ENCODE measurements at regions of chr6 and their contacts with region 1.

Region 1: DNA sequence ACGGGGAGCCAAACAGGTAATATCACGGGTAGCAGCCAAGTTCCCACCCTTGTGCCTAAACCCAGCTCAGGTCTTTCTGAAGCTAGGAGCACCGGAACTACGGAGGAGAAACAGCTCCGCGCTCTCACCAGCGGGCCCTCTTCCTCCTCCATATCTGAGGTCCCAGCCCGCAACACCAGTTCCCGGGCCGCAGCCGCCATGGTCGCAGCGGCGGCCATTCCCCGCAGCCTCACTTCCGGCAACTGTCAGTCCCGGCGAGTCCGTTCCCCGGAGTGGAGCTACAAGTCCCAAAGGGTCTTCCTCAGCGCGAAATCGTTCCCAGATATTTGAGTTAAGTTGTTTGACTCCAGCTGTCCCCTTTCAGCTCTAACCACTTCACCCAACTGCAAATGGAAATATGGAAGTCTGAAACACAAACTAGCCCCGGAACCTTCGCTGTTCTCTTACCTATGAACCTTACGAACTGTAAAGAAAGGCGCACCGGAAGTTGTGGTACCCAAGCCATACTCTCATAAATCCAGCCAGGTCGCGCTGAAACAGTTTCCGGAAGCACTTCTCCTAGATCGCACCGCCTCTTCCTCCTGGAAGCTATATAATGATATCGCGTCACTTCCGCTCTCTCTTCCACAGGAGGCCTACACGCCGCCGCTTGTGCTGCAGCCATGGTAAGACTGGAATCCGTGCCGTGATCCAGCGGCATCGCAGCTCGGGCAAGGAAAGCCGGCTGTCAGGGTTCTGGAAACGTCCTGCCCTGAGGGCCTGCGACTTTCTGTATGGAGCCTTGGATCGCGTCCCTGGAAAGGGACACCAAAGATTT is at the starts of genes RPS18 and VPS52:
- DNase-seq: peak; percentile 94
- ATAC-seq: peak; percentile 92
- H3K4me3 Mint-ChIP-seq: peak within 1 kb of the TSS; percentile 91
- H3K27ac Mint-ChIP-seq: peak within 1 kb of the TSS; percentile 100
- H3K4me1 Mint-ChIP-seq: peaks cover 47% of the 10 kb centered on the region
- H3K27me3 Mint-ChIP-seq: no peaks in the 10 kb centered on the region
- total RNA-seq, gene RPS18: 2,706 to 4,631 TPM
- total RNA-seq, gene VPS52: 35.6 to 45.2 TPM

Region 2: GRCh38 chr6:32853541-32854375 is 417.9 kb before region 1 on chr6 and contains the starts of genes PSMB9 and TAP1:
- CTCF ChIA-PET with region 1: no interaction called
- POLR2A ChIA-PET with region 1: no interaction called
- intact Hi-C with region 1: loop called in 1 of 2 experiments (anchors 5 kb)
- DNase-seq: peak; percentile 98
- ATAC-seq: peak; percentile 84
- H3K4me3 Mint-ChIP-seq: peak within 1 kb of the TSS; percentile 100
- H3K27ac Mint-ChIP-seq: peak within 1 kb of the TSS; percentile 99
- H3K4me1 Mint-ChIP-seq: peaks cover 62% of the 10 kb centered on the region
- H3K27me3 Mint-ChIP-seq: no peaks in the 10 kb centered on the region
- total RNA-seq, gene PSMB9: 210 to 282 TPM
- total RNA-seq, gene TAP1: 191 to 255 TPM

Region 3: GRCh38 chr6:33161354-33162331 is 110.0 kb before region 1 on chr6:
- CTCF ChIA-PET with region 1: no interaction called
- POLR2A ChIA-PET with region 1: no interaction called
- intact Hi-C with region 1: no loop called
- DNase-seq: peak; percentile 90
- ATAC-seq: peak; percentile 95
- H3K4me3 Mint-ChIP-seq: peak overlapping the region; percentile 71
- H3K27ac Mint-ChIP-seq: peak overlapping the region; percentile 43
- H3K4me1 Mint-ChIP-seq: peaks cover 10% of the 10 kb centered on the region
- H3K27me3 Mint-ChIP-seq: peaks cover 4% of the 10 kb centered on the region

Region 4: DNA sequence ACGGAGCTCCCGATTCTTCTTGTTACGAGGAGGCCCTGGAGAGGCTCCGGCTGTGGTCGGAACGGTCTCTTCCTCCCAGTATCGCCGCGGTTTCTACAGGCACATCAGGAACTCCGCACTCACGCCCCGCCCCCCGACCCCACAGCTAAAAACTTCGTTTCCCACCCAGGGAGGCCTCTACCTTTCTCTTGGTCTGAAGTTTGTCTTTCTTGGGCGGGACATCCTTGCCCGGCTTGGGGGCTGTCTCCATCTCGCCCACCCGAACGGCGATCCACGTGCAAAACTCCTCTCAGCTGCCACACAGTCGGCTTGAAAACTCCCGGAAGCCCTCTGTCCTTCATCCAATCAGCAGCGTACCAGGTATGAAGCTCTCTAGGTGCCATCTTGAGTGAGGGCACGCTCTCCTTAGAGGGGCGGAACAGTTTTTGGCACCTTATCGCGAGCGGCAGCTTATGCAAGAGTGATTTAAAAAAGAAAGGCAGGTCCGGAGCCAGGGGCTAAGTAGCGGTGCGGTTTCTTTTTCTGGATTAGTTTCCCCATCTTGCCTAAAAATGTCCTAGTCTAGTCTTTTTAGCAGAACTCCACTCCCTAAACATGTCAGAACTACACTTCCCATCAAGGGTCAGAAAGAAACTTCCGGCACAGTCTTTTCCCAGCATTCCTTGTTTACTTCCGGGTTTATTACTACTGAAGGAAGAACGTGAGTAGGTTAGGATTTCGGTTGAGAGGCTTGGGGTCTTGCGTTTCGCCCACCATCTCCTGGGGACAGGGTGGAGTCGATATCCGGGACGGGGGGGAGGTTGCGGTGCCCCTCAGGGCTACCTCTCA is 17.5 kb after region 1 on chr6 and contains the starts of genes PFDN6 and WDR46:
- CTCF ChIA-PET with region 1: interaction called, 17 read pairs
- POLR2A ChIA-PET with region 1: interaction called, 25 read pairs
- intact Hi-C with region 1: loop called in 1 of 2 experiments (anchors 1 kb)
- DNase-seq: peak; percentile 87
- ATAC-seq: peak; percentile 98
- H3K4me3 Mint-ChIP-seq: peak within 1 kb of the TSS; percentile 98
- H3K27ac Mint-ChIP-seq: peak within 1 kb of the TSS; percentile 97
- H3K4me1 Mint-ChIP-seq: peaks cover 37% of the 10 kb centered on the region
- H3K27me3 Mint-ChIP-seq: no peaks in the 10 kb centered on the region
- total RNA-seq, gene PFDN6: 65.4 to 96.9 TPM
- total RNA-seq, gene WDR46: 63.5 to 69.4 TPM

Region 5: DNA sequence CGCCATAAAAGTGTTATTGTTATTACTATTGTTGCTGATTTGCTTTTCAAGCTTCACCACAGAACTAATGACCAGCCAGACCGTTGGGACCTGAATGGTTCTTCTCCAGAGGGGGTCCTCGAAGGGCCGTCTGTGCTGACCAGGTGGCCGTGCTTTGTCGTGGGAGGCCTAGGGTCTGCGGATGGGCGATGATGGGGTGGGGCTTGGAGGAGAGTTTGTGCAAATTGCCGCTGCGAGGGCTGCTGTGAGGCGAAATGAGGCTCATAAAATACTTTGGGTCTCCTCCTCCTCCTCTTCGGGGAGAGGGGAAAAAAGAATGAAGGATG is 51.9 kb after region 1 on chr6:
- CTCF ChIA-PET with region 1: no interaction called
- POLR2A ChIA-PET with region 1: interaction called, 10 read pairs
- intact Hi-C with region 1: loop called (anchors 1 kb)
- DNase-seq: no peak
- ATAC-seq: no peak
- H3K4me3 Mint-ChIP-seq: peak overlapping the region; percentile 99
- H3K27ac Mint-ChIP-seq: peak overlapping the region; percentile 99
- H3K4me1 Mint-ChIP-seq: peaks cover 46% of the 10 kb centered on the region
- H3K27me3 Mint-ChIP-seq: no peaks in the 10 kb centered on the region

Region 6: DNA sequence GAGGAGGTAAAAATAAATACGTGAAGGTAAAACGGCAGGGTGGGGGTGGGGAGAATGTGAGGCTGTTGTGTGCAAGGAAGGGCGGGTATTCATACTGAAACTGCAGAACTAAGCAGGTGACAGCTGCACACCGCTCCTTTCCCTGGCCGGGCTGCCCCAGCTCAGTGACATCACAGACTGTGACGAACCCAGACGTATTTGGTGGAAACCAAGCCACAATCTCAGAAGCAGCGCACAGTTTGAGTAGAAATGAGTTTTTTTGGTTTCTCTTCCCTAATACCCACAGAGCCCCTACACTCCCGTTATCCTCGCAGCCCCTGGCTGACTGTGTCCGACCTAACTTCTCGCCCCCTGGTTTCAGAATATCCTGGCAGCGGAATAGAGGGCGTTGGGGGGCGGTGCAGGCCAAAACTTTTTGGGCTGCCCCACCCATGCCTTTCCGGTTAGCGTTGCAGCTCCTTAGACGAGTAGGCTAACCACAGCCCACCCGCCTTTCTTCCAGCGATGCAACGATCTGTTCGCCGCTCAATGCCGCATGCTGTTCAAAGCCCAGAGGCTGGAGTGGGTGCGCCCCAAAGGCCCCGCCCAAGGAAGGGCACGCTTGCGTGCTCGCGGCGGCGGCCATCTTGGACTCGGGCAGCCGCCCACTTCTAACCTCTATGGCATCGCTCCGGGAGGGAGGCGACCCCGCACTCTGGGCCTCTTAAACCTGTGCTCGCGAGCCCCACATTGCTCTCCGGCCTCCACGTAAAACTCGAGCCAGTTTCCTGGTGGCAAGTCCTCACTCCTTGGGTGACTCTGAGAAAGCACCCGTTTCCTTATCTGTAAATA is 299.4 kb after region 1 on chr6:
- CTCF ChIA-PET with region 1: no interaction called
- POLR2A ChIA-PET with region 1: no interaction called
- intact Hi-C with region 1: loop called in 1 of 2 experiments (anchors 1 kb)
- DNase-seq: peak; percentile 98
- ATAC-seq: peak; percentile 90
- H3K4me3 Mint-ChIP-seq: peak overlapping the region; percentile 81
- H3K27ac Mint-ChIP-seq: peak overlapping the region; percentile 100
- H3K4me1 Mint-ChIP-seq: peaks cover 42% of the 10 kb centered on the region
- H3K27me3 Mint-ChIP-seq: no peaks in the 10 kb centered on the region

Measured in activated CD4-positive, alpha-beta T cell treated with anti-CD3 and anti-CD28 coated beads for 36 hours (primary cell).